GM12878 (cell line): ENCODE measurements at regions of chr19 and their contacts with region 1.

Region 1: DNA sequence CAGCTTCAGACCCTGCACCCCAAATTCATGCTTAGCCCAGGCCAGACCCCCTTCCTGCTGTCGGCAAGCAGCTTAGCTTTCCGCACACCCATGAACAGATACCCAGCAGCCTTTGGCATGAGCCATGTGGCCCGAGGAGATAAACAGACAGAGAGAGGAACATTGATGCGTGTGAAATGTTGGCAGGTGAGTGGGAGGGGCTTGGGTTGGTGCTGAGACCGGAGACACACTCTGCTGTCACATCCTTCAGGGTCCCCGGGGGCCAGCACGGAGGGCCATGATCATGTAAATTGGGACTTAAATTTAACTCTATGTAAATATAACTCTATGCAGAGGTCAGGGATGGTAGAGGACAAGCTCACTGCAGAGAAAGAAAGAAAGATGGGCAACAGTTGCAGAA is 1.5 kb downstream of the CD22 start:
- DNase-seq: peak; percentile 93
- ATAC-seq: peak; percentile 56
- H3K4me3 ChIP-seq: peak overlapping the region; percentile 92
- H3K27ac ChIP-seq: peak overlapping the region; percentile 93
- H3K4me1 ChIP-seq: peaks cover 35% of the 10 kb centered on the region
- H3K27me3 ChIP-seq: no peaks in the 10 kb centered on the region
- CTCF ChIP-seq: no peak
- EP300 ChIP-seq: peak in 1 of 2 experiments; percentile 58; a peak in 2 of 4 replicates
- POLR2A ChIP-seq: peak; percentile 85
- RAD21 ChIP-seq: no peak

Region 2: GRCh38 chr19:35347171-35347929 is 16.9 kb after region 1 on chr19 and contains the start of gene FFAR1:
- CTCF ChIA-PET with region 1: interaction called, 61 read pairs
- POLR2A ChIA-PET with region 1: interaction called, 135 read pairs
- RAD21 ChIA-PET with region 1: interaction called, 127 read pairs
- SMC1A ChIA-PET with region 1: interaction called, 152 read pairs
- in situ Hi-C with region 1: no loop called
- intact Hi-C with region 1: loop called (anchors 1 kb)
- DNase-seq: peak; percentile 96
- ATAC-seq: peak; percentile 74
- H3K4me3 ChIP-seq: no peak within 1 kb of the TSS; the same call in 1 of the 2 replicates
- H3K27ac ChIP-seq: peak within 1 kb of the TSS; percentile 97
- H3K4me1 ChIP-seq: peaks cover 56% of the 10 kb centered on the region
- H3K27me3 ChIP-seq: no peaks in the 10 kb centered on the region
- CTCF ChIP-seq: no peak
- EP300 ChIP-seq: peak in 1 of 2 experiments; percentile 66; a peak in 2 of 4 replicates
- POLR2A ChIP-seq: peak; percentile 72
- RAD21 ChIP-seq: no peak
- polyA plus RNA-seq, gene FFAR1: 0.05 to 0.07 TPM

Region 3: DNA sequence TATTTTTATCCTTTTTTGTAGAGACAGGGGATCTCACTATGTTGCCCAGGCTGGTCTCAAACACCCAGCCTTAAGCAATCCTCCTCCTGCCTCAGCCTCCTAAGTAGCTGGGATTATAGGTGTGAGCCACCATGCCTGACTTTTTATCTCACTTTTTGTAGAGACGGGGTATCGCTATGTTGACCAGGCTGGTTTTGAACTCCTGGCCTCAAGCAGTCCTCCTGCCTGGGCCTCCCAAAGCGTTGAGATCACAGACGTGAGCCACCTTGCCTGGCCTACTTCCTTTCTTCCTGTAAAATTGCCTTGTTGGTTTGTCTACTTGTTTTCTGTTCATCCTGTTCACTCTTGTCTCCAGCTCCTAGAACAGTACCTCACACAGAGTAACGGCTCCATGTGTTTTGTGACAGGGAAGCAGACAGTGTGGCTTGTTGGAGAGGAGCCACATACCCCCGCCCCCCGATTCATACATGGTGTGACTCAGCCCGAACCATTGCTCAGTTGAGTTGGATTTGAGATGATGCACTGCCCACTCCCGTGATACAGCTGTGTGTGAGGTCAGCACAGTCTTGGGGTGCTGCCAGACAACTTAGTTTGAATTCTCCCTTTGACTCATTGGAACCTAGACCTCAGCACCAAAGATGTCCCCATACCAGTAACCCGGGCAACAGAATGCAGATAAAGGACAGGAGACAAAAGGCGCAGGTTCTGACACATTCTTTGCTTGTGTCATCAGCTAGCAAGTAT is 74.6 kb after region 1 on chr19:
- CTCF ChIA-PET with region 1: interaction called, 3 read pairs
- POLR2A ChIA-PET with region 1: interaction called, 12 read pairs
- RAD21 ChIA-PET with region 1: interaction called, 4 read pairs
- SMC1A ChIA-PET with region 1: interaction called, 3 read pairs
- in situ Hi-C with region 1: no loop called
- intact Hi-C with region 1: no loop called
- DNase-seq: peak; percentile 95
- ATAC-seq: peak; percentile 80
- H3K4me3 ChIP-seq: no peak overlapping the region
- H3K27ac ChIP-seq: peak overlapping the region; percentile 79
- H3K4me1 ChIP-seq: peaks cover 57% of the 10 kb centered on the region
- H3K27me3 ChIP-seq: no peaks in the 10 kb centered on the region
- CTCF ChIP-seq: no peak
- EP300 ChIP-seq: peak; percentile 90
- POLR2A ChIP-seq: no peak
- RAD21 ChIP-seq: no peak

Region 4: GRCh38 chr19:35462476-35462953 is 132.0 kb after region 1 on chr19:
- CTCF ChIA-PET with region 1: interaction called, 8 read pairs
- POLR2A ChIA-PET with region 1: interaction called, 14 read pairs
- RAD21 ChIA-PET with region 1: interaction called, 37 read pairs
- SMC1A ChIA-PET with region 1: interaction called, 12 read pairs
- in situ Hi-C with region 1: no loop called
- intact Hi-C with region 1: no loop called
- DNase-seq: peak; percentile 96
- ATAC-seq: peak; percentile 79
- H3K4me3 ChIP-seq: peak overlapping the region; percentile 33; the same call in 1 of the 2 replicates
- H3K27ac ChIP-seq: peak overlapping the region; percentile 73
- H3K4me1 ChIP-seq: peaks cover 56% of the 10 kb centered on the region
- H3K27me3 ChIP-seq: no peaks in the 10 kb centered on the region
- CTCF ChIP-seq: peak in 1 of 3 experiments; percentile 42; a peak in 2 of 6 replicates
- EP300 ChIP-seq: peak; percentile 92 to 97
- POLR2A ChIP-seq: no peak
- RAD21 ChIP-seq: peak; percentile 65

Region 5: GRCh38 chr19:35509861-35510625 is 179.6 kb after region 1 on chr19:
- CTCF ChIA-PET with region 1: interaction called, 4 read pairs
- POLR2A ChIA-PET with region 1: interaction called, 12 read pairs
- RAD21 ChIA-PET with region 1: interaction called, 4 read pairs
- SMC1A ChIA-PET with region 1: interaction called, 3 read pairs
- in situ Hi-C with region 1: no loop called
- intact Hi-C with region 1: no loop called
- DNase-seq: no peak
- ATAC-seq: peak; percentile 88
- H3K4me3 ChIP-seq: peak overlapping the region; percentile 74
- H3K27ac ChIP-seq: peak overlapping the region; percentile 52
- H3K4me1 ChIP-seq: peaks cover 8% of the 10 kb centered on the region
- H3K27me3 ChIP-seq: no peaks in the 10 kb centered on the region; a peak in 1 of 4 replicates
- CTCF ChIP-seq: peak; percentile 96; a peak in 5 of 6 replicates
- EP300 ChIP-seq: no peak
- POLR2A ChIP-seq: no peak; the same call in 1 of the 2 replicates
- RAD21 ChIP-seq: peak; percentile 71